ENCODE measurements at regions of chr10 and their contacts with region 1.

Region 1: DNA sequence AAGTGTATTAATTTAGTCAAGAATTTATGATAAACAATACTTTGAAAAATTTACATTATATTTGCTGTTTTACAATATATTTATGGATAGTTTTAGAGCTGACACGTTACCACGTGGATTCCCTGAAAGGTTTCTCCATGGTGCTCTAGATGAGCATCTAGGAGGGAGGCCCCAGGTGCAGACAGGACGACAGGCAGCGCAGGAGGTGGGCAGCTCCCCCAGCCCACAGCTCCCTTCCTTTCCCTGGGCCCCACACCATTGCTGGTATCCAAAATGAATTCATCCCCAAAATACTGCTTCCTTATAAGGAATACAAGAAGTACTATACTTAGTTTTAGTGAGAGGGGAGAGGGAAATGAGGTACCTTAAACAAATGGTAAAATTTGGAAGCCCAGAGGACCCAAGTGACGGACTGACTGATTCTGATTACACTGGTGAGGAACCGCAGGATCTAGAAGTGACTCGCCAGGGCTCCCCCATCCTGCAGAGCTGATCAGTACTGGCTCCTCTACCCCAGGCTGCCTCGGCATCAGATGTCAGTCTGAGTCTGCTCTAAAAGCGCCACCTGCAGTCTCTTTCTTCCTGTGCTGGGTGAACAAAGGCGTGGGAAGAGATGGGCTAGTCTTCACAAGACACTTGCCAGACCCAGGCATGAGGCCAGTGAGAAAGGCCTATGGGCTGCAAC is 89.2 kb downstream of the DLG5 start:
- DNase-seq: peak; percentile 30 to 85 (median 62)
- ATAC-seq: peak; percentile 55
- H3K4me3 ChIP-seq: no peak overlapping the region
- H3K4me3 Mint-ChIP-seq: no peak overlapping the region
- H3K27ac ChIP-seq: peak overlapping the region in 1 of 2 experiments; percentile 87
- H3K27ac Mint-ChIP-seq: peak overlapping the region; percentile 84
- H3K4me1 ChIP-seq: peaks cover 10% of the 10 kb centered on the region
- H3K4me1 Mint-ChIP-seq: peaks cover 20% of the 10 kb centered on the region
- H3K27me3 ChIP-seq: no peaks in the 10 kb centered on the region
- H3K27me3 Mint-ChIP-seq: no peaks in the 10 kb centered on the region
- CTCF ChIP-seq: no peak

Region 2: GRCh38 chr10:77024461-77024860 is 812.9 kb before region 1 on chr10:
- CTCF ChIA-PET with region 1: no interaction called
- POLR2A ChIA-PET with region 1: no interaction called
- intact Hi-C with region 1: no loop called
- DNase-seq: no peak
- ATAC-seq: no peak
- H3K4me3 ChIP-seq: no peak overlapping the region
- H3K4me3 Mint-ChIP-seq: no peak overlapping the region
- H3K27ac ChIP-seq: no peak overlapping the region
- H3K27ac Mint-ChIP-seq: no peak overlapping the region
- H3K4me1 ChIP-seq: no peaks in the 10 kb centered on the region
- H3K4me1 Mint-ChIP-seq: no peaks in the 10 kb centered on the region
- H3K27me3 ChIP-seq: no peaks in the 10 kb centered on the region
- H3K27me3 Mint-ChIP-seq: peaks cover 7% of the 10 kb centered on the region
- CTCF ChIP-seq: no peak

Region 3: DNA sequence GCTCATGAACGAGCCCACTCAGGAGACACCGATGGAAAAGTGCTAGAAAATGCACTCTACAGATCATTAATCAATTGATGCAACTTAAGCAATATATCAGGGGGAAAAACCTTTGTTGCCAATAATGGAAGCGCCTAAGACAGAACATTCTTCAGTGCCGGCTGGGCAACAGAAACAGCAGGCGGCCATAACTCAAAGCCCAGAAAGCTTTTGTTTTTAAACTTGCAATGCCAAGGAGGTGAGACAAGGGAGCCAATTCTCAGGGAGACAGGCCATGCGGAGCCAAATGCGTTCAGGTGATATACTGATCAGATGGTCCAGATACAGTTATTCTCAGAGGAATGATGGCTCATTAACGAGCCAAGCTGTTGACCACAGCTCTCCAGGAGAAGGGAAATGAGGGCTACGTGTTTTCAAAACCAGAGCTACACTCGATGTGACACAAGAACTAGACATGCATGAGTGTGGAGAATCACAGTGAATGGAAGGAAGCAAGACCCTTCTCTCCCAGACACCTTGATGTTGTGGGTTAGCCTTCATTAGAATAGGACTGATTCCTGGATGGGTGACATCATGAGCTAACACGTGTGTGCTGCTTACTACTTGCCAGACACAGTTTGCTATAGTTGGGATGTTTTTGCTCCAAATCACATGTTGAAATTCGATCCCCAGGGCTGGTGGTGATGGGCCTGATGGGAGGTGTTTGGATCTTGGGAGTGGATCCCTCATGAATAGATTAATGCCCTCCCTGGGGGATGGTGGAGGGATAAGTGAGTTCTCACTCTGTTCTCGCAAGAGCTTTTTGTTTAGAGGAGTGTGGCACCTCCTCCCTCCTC is 120.7 kb before region 1 on chr10:
- CTCF ChIA-PET with region 1: interaction called, 53 read pairs
- POLR2A ChIA-PET with region 1: no interaction called
- intact Hi-C with region 1: loop called (anchors 1 kb)
- DNase-seq: no peak
- ATAC-seq: no peak
- H3K4me3 ChIP-seq: no peak overlapping the region
- H3K4me3 Mint-ChIP-seq: no peak overlapping the region
- H3K27ac ChIP-seq: no peak overlapping the region
- H3K27ac Mint-ChIP-seq: no peak overlapping the region
- H3K4me1 ChIP-seq: no peaks in the 10 kb centered on the region
- H3K4me1 Mint-ChIP-seq: peaks cover 2% of the 10 kb centered on the region
- H3K27me3 ChIP-seq: peaks cover 0 to 3% of the 10 kb centered on the region in 2 experiments
- H3K27me3 Mint-ChIP-seq: peaks cover 13% of the 10 kb centered on the region
- CTCF ChIP-seq: no peak

Region 4: GRCh38 chr10:77801474-77802161 is 35.8 kb before region 1 on chr10:
- CTCF ChIA-PET with region 1: no interaction called
- POLR2A ChIA-PET with region 1: no interaction called
- intact Hi-C with region 1: loop called (anchors 1 to 5 kb)
- DNase-seq: peak in 7 of 9 experiments; percentile 4 to 79 (median 44)
- ATAC-seq: peak; percentile 85
- H3K4me3 ChIP-seq: no peak overlapping the region
- H3K4me3 Mint-ChIP-seq: no peak overlapping the region
- H3K27ac ChIP-seq: peak overlapping the region in 1 of 2 experiments; percentile 46
- H3K27ac Mint-ChIP-seq: peak overlapping the region; percentile 71
- H3K4me1 ChIP-seq: peaks cover 15% of the 10 kb centered on the region
- H3K4me1 Mint-ChIP-seq: peaks cover 14% of the 10 kb centered on the region
- H3K27me3 ChIP-seq: no peaks in the 10 kb centered on the region
- H3K27me3 Mint-ChIP-seq: no peaks in the 10 kb centered on the region
- CTCF ChIP-seq: no peak

Measured in CD8-positive, alpha-beta T cell (primary cell).